ENCODE measurements at regions of chr16 and their contacts with region 1.

Region 1: DNA sequence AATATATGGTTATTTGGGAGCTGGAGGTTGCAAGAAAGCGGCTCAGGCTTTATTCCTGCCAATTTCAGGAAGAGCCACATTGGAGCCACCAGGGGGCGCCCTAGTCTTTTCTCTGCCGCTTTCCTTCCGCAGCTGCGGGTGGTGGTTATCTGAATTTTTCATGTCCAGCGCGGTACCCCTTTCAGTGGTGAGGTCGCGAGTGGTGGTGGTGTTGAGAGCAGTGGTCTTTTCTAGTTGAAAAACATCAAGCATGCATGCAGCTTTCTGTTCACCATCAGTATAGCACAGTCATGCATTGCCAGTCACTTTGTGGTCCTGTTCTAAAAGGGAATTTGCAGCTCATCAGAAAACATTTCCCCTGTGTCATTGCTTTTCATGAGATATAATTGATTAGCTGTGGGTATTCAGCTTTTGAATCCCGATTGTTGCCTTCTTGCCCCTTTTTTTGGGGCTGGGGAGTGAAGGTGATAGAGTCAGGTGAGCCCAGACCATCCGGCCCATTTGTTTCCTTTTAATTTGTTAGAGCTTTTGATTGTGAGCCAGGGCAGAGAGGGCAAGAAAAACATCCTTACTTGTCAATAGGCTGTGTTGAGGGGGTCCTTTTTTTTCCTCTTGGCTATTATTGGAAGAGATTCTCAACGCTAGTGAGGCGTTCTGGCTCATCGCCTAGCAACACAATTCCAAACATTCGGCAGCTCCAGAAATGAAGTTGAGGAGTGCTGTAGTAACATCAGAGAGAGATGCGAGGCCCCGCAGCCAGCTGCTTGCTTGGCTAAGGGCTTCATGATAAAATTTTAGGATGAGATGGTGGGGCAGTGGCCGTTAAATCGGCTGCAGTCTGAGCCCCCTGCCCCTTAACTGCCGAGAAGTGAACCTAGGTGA is 119.0 kb downstream of the SNX29 start:
- DNase-seq: peak; percentile 65 to 80 (median 68)
- ATAC-seq: peak; percentile 30 to 75 (median 60)
- H3K4me3 ChIP-seq: peak overlapping the region in 9 of 12 donors; percentile 0 to 51 (median 34)
- H3K27ac ChIP-seq: peak overlapping the region in 5 of 12 donors; percentile 21 to 40 (median 32)
- H3K4me1 ChIP-seq: peaks cover 2 to 47% (median 33%) of the 10 kb centered on the region in 12 donors
- H3K27me3 ChIP-seq: no peaks in the 10 kb centered on the region
- CTCF ChIP-seq: peak; percentile 86 to 97 (median 94)
- POLR2A ChIP-seq: no peak

Region 2: GRCh38 chr16:12147681-12148080 is 52.2 kb after region 1 on chr16:
- intact Hi-C with region 1: no loop called
- DNase-seq: peak in 3 of 5 donors; percentile 29 to 63 (median 43)
- ATAC-seq: peak; percentile 56 to 89 (median 84)
- H3K4me3 ChIP-seq: peak overlapping the region in 6 of 12 donors; percentile 0 to 27 (median 14)
- H3K27ac ChIP-seq: peak overlapping the region in 11 of 12 donors; percentile 11 to 72 (median 48)
- H3K4me1 ChIP-seq: peaks cover 0 to 24% (median 13%) of the 10 kb centered on the region in 12 donors
- H3K27me3 ChIP-seq: no peaks in the 10 kb centered on the region
- CTCF ChIP-seq: peak in 1 of 12 donors; percentile 22
- POLR2A ChIP-seq: no peak

Region 3: GRCh38 chr16:12215277-12216105 is 120.0 kb after region 1 on chr16:
- intact Hi-C with region 1: loop called in 7 of 10 experiments (anchors 5 to 10 kb)
- DNase-seq: no peak
- ATAC-seq: peak in 1 of 4 donors; percentile 34
- H3K4me3 ChIP-seq: no peak overlapping the region
- H3K27ac ChIP-seq: no peak overlapping the region
- H3K4me1 ChIP-seq: no peaks in the 10 kb centered on the region
- H3K27me3 ChIP-seq: no peaks in the 10 kb centered on the region
- CTCF ChIP-seq: peak in 7 of 12 donors; percentile 7 to 32 (median 16)
- POLR2A ChIP-seq: no peak

Region 4: DNA sequence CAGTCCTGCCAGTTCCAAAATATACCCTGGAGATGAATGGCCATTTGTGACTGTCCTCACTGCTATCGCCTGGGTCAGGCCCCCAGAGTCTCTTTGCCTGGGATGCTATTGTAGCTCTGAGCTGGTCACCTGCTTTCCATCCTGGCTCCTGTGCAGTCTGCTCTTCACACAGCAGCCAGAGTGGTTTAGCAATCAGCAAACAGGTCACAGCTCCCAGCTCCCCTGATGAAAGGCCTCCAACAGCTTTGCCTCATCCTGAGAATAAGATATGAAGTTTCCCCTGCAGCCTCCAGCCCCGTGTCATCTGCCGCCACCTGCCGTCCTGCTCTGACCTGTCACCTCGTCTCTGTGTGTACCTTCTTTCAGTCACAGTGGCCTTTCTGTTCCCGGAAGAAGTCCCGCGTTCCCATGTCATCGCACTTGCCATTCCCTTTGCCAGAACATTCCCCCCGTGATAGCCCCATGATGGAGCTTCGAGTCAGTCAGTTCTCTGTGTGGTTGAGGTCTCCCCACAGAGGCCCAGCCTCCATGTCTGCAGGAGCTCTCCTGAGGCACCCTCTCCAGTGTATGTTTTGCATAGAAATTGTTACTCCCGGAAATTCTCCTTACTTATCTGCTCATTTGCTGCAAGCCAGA is 162.5 kb after region 1 on chr16:
- intact Hi-C with region 1: loop called in 5 of 10 experiments (anchors 2 to 10 kb)
- DNase-seq: peak in 1 of 5 donors; percentile 34
- ATAC-seq: peak in 3 of 4 donors; percentile 37 to 50 (median 48)
- H3K4me3 ChIP-seq: no peak overlapping the region
- H3K27ac ChIP-seq: no peak overlapping the region
- H3K4me1 ChIP-seq: peaks cover 0 to 10% (median 0%) of the 10 kb centered on the region in 12 donors
- H3K27me3 ChIP-seq: no peaks in the 10 kb centered on the region
- CTCF ChIP-seq: peak in 3 of 12 donors; percentile 6 to 18 (median 12)
- POLR2A ChIP-seq: no peak

Region 5: DNA sequence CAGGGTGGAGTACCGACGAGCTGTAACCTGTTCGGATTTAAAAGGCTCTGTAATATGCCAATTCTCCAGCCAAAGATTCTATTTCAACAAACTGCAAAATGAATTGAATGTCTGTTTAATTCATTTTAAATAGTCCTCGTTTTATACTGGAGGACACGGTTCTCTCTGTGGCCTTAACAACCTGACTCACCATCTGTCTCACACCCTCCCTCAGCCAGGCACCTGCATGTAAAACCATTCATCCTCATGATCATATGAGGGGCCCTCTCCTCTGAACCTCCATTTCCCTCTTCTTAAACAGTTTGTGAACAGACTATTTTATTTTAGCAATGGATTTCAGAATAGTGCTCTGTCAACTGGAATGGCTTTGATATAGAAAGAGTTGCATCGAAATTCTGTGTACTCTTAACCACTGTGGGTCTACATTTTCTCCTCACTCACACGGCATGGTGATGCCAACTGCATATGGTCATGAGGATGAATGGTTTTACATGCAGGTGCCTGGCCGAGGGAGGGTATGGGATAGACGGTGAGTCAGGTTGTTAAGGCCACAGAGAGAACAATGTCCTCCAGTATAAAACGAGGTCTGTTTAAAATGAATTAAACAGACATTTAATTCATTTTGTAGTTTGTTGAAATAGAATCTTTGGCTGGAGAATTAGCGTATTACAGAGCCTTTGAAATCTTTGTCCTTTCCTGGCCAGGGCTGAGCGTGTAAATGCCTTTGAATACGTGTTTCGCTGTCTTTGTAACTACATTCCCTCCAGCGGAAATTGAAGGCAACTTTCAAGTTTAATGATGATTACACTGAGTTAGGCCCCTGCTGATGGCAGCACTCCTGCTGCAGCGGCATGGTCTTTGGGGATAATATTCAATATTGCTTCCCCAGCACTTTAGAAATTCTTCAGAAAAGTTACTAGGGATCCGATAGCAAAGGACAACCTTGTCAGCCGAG is 210.6 kb after region 1 on chr16:
- intact Hi-C with region 1: loop called in 2 of 10 experiments (anchors 5 to 10 kb)
- DNase-seq: no peak
- ATAC-seq: no peak
- H3K4me3 ChIP-seq: no peak overlapping the region
- H3K27ac ChIP-seq: no peak overlapping the region
- H3K4me1 ChIP-seq: peaks cover 0 to 2% (median 0%) of the 10 kb centered on the region in 12 donors
- H3K27me3 ChIP-seq: no peaks in the 10 kb centered on the region
- CTCF ChIP-seq: no peak
- POLR2A ChIP-seq: no peak

Region 6: DNA sequence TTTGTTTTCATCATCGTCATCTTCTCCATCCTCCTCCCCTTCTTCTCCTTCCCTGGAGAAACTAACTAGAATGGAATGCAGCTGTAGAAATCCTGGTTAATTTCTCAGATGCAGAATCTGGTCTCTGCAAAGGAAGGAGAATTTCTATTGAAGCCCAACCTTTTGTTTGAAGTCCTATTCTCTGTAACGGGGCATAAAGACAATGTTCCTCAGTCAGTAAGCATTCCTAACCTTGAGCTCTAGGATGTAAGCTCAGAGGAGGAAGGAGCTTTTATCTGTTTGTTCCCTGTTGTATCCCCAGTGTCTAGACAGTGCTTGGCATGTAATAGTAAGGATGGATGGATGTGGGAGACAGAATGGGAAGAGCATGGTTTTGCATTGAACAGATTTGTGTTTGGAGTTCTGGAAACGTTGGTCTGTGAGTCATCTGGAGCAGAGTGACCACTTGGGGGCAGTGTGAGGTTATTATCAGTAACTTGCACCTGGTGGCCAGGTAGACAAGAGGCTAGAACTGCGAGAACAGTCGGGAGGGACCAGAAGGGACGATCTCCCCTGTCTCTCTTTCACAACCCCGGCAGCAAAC is 244.7 kb after region 1 on chr16:
- intact Hi-C with region 1: loop called in 5 of 10 experiments (anchors 1 to 10 kb)
- DNase-seq: no peak
- ATAC-seq: no peak
- H3K4me3 ChIP-seq: no peak overlapping the region
- H3K27ac ChIP-seq: no peak overlapping the region
- H3K4me1 ChIP-seq: peaks cover 0 to 27% (median 4%) of the 10 kb centered on the region in 12 donors
- H3K27me3 ChIP-seq: no peaks in the 10 kb centered on the region
- CTCF ChIP-seq: peak in 10 of 12 donors; percentile 10 to 43 (median 27)
- POLR2A ChIP-seq: no peak

Region 7: GRCh38 chr16:12803203-12804097 is 707.9 kb after region 1 on chr16 and contains the start of gene CPPED1:
- intact Hi-C with region 1: loop called in 1 of 10 experiments (anchors 10 kb)
- DNase-seq: peak; percentile 93 to 97 (median 97)
- ATAC-seq: peak; percentile 95 to 99 (median 98)
- H3K4me3 ChIP-seq: peak within 1 kb of the TSS; percentile 30 to 79 (median 67)
- H3K27ac ChIP-seq: peak within 1 kb of the TSS; percentile 43 to 96 (median 84)
- H3K4me1 ChIP-seq: peaks cover 0 to 51% (median 14%) of the 10 kb centered on the region in 12 donors
- H3K27me3 ChIP-seq: peaks cover 0 to 4% (median 0%) of the 10 kb centered on the region in 9 donors
- CTCF ChIP-seq: no peak
- POLR2A ChIP-seq: peak in 1 of 2 donors; percentile 48
- total RNA-seq, gene CPPED1: 5.6 to 25.1 (median 12.6) TPM

Measured in heart left ventricle (tissue), 16 donors.